Activated CD4-positive, alpha-beta memory T cell treated with anti-CD3 and anti-CD28 coated beads for 36 hours (primary cell): ENCODE measurements at regions of chr11 and their contacts with region 1.

Region 1: DNA sequence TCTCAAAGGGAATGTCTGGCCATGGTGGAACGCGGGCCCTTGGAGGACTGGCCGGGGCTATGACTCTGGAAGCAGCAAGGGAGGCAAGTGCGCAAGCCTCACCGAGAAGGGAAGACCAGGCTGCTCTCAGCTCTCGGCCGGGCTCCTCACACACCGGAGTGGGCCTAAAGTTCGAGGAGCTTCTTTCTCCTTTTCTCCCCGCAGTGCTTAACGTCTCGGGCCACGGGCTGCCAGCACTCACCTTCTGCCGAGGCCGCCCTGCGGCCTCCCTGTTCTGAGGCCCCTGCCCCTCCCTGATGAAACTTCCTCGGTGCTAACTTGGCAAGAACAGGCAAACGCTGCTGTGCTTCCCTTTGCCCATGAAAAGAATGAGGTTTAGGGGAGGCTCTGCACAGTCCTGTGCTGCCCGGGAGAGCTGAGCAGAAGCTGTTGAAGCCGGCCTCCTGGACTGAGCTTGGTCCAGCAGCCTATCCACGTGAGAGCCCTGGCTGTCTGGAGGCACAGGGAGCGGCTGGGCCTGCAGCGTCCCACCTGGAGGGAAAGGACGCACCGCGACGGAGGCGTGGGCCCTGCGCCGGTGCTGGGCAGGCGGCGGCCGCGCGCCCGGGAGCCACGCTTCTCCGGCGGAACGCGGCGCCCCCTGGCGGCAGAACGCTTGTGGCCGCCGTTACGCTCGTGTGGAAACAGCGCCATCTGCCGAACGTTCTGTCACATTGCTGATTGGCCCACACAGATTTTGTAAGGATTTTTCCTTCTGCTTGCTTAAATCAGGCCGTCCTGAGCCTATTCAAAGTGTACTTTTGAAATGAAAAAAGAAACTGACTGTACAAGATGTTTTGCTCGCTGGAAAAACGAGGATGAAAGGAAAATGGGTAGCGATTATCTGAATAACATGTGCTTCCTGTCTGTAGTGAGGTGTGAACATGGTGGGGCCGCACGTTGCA is 65.0 kb upstream of the TMEM45B start:
- DNase-seq: peak; percentile 85
- H3K4me3 Mint-ChIP-seq: no peak overlapping the region
- H3K27ac Mint-ChIP-seq: no peak overlapping the region
- H3K4me1 Mint-ChIP-seq: peaks cover 7% of the 10 kb centered on the region
- H3K27me3 Mint-ChIP-seq: peaks cover 3% of the 10 kb centered on the region

Region 2: DNA sequence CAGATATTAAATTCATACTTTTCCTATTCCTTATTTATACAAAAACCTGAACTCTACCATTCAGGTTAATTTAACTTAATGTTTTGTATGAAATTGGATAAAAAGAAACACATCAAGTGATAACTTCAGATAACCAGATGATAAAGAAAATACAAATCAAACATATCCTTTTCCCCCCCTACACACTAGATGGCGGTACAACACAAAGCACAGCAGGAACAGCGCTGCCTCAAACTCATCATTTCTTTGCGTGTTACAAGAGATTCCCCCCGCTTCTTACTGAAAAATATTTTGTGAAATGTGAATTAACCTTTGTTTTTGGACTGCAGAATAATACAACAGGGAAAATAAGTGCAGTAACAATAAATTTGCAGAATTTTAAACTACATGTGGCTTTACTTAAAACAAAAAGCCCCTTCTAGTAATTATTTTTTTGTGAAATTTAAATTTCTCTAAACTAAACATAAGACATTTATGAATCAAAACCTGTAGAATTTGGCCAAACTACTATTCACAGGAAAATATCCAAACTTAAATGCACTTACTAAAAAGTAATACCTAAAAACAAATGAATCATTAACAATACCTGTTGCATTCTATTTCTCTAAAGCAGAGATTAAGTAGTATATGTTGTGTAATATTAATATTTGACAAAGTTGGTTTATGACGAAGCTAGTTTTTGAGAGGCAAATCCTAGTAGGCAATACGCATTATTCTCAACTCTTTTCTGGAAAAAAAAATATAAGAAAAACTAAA is 632.8 kb before region 1 on chr11:
- CTCF ChIA-PET with region 1: interaction called, 6 read pairs
- POLR2A ChIA-PET with region 1: no interaction called
- intact Hi-C with region 1: loop called (anchors 1 kb)
- DNase-seq: peak; percentile 51
- H3K4me3 Mint-ChIP-seq: no peak overlapping the region
- H3K27ac Mint-ChIP-seq: no peak overlapping the region
- H3K4me1 Mint-ChIP-seq: no peaks in the 10 kb centered on the region
- H3K27me3 Mint-ChIP-seq: no peaks in the 10 kb centered on the region

Region 3: DNA sequence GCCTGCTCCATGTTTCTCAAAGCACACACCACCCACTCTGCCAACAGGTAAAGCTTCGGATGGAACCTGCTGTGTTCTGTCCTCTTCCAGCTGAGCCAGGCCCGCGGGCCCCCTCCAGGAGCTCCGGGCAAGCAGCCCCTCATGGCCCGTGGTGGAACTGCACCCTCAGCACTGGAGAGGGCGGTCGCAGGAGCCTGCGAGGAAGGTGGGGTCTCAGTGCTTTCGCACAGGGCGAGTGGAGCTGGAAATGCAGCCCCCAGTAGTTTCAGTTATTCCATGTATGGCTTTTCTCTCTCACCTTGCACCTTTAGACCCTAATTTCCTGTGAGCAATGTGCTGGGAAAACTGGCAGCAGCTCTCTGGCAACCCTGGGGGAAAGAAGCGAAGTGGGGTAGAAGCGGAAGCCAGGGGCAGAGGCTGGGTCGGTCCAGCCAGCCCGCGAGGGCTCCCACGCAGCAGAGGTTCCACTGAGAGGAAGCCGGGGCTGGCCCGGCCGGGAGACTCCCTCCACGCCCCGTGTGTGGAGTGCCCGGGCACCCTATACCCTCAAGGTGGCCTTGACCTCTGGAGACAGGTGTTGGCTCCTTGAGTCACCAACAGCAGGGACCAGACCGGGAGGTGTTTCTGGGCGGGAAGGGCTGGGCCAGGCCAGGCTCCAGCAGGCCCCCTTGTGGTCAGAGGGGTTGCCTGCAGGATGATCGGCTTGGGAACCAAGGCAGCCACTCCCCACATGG is 54.9 kb before region 1 on chr11:
- CTCF ChIA-PET with region 1: interaction called, 8 read pairs
- POLR2A ChIA-PET with region 1: no interaction called
- intact Hi-C with region 1: loop called (anchors 5 kb)
- DNase-seq: peak; percentile 80
- H3K4me3 Mint-ChIP-seq: peak overlapping the region; percentile 48
- H3K27ac Mint-ChIP-seq: no peak overlapping the region
- H3K4me1 Mint-ChIP-seq: peaks cover 10% of the 10 kb centered on the region
- H3K27me3 Mint-ChIP-seq: no peaks in the 10 kb centered on the region

Region 4: DNA sequence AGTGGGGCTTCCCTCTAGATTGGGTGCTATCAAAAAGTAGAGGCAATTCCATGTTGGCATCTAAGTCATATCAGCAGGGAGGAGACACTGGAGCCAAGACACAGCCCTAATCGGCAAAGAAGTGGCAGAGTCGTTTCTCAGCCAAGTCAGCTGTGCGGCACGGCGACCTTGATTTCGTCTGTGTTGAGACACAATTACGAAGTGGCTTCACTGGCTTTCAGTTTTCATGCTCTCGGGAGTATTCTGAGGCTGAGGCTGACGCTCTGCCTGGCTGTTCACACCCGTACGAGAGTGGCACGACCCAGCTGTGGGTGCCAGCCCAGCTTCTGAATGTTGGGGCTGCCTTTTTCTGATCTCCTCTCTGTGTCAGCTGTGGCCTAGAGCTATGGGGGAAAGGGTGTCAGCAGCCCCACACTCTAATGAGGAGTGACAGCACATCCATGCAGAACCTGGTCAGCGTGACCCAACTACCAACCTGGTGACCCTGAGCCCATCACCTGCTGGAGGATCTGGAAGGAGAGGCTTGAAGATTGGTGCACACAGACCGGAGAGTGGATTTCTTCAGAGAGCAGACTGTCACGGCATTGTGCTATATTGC is 40.7 kb before region 1 on chr11:
- CTCF ChIA-PET with region 1: no interaction called
- POLR2A ChIA-PET with region 1: no interaction called
- intact Hi-C with region 1: no loop called
- DNase-seq: no peak
- H3K4me3 Mint-ChIP-seq: no peak overlapping the region
- H3K27ac Mint-ChIP-seq: no peak overlapping the region
- H3K4me1 Mint-ChIP-seq: no peaks in the 10 kb centered on the region
- H3K27me3 Mint-ChIP-seq: no peaks in the 10 kb centered on the region

Region 5: DNA sequence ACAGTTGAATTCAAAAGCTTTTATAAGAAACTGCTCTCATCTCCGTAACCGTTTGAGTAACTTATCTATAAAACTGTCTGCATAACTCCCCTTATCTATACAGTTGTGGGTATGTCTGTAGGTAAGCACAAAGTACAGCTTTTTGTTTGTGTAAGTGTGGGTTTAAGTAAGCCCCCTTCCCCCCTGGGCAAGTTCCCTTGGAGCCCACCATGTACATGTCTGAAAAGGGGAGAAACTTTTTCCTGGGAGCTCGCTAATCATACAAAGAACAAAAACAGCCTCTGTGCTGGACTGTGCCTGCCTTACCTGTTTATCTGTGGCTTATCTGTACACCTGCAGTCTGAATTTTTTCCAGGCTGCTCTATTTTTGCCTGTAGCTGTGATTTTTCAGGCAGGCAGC is 28.7 kb after region 1 on chr11:
- CTCF ChIA-PET with region 1: no interaction called
- POLR2A ChIA-PET with region 1: no interaction called
- intact Hi-C with region 1: no loop called
- DNase-seq: no peak
- H3K4me3 Mint-ChIP-seq: no peak overlapping the region
- H3K27ac Mint-ChIP-seq: no peak overlapping the region
- H3K4me1 Mint-ChIP-seq: no peaks in the 10 kb centered on the region
- H3K27me3 Mint-ChIP-seq: no peaks in the 10 kb centered on the region